Activated CD4-positive, alpha-beta memory T cell treated with anti-CD3 and anti-CD28 coated beads, Interleukin-2, amount 10 ng/mL, durations not matched to agents 7 days and 5 days (primary cell): ENCODE measurements at regions of chr17 and their contacts with region 1.

Region 1: DNA sequence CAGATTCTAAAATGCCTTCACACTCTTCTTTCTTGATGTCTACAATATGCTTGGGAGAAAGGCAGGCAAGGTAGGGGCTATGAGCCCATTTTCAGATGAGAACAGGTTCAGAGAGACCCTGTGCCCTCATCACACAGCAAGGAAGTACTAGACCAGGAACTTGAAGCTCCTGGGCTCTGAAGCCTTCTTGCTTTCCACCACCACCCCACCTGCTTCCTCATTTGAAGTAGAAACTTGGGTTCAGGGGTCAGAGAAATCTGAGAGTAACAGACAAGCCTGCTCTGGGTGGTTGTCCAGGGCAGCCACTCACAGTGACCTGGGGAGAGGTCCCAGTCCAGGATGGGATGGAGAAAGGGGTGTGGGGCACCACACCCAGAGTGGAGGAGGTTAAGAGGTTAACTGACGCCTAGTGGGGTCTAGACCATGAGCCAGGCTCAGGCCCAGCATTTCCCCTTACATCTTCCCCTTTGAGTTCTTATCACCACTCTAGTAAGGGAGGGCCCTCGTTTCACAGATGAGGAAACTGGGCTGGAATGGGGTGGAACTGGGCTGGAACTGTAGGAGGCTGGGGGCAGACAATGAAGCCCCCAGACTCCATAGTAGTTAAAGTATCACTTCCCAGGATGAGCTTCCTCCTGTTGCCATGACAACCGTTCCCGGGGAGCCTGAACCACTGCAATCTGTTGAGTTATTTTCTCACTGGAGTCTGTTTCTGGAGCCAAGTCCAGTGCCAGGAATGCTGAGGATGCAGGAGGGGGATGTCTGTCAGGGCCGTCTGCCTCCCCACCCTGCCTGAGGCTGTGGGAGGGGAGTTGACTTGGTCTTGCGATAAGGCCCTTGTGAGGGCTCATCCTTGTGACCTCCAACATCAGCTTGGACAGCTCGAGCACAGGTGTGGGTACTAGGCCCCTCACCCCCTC is 16.2 kb upstream of the PHF12 start:
- DNase-seq: no peak
- H3K4me3 Mint-ChIP-seq: no peak overlapping the region
- H3K27ac Mint-ChIP-seq: no peak overlapping the region
- H3K4me1 Mint-ChIP-seq: no peaks in the 10 kb centered on the region
- H3K27me3 Mint-ChIP-seq: peaks cover 22% of the 10 kb centered on the region

Region 2: GRCh38 chr17:29089601-29090044 is 122.1 kb after region 1 on chr17:
- CTCF ChIA-PET with region 1: interaction called, 10 read pairs
- POLR2A ChIA-PET with region 1: interaction called, 3 read pairs
- DNase-seq: no peak
- H3K4me3 Mint-ChIP-seq: no peak overlapping the region
- H3K27ac Mint-ChIP-seq: no peak overlapping the region
- H3K4me1 Mint-ChIP-seq: no peaks in the 10 kb centered on the region
- H3K27me3 Mint-ChIP-seq: no peaks in the 10 kb centered on the region

Region 3: DNA sequence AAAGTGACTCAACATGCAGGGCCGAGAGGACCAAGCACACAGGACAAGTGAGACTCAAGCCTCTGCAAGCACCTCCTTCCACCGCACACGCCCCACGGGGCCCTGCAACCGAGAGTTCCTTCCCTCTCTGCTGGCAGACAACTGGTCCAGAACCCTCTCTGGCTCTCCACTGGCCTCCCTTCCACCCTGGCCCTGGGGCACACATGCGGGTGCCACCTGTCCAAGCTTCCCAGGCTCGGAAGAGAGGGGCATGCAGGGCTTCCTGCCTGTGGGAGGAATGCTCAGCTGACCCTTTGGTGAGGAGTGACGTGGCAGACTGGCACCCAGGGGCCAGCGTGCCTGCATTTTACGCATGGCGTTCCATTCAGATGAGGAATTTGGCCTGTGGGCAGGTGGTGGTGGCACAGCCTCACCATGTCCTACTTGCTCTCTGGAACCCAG is 135.3 kb after region 1 on chr17:
- CTCF ChIA-PET with region 1: interaction called, 17 read pairs
- POLR2A ChIA-PET with region 1: no interaction called
- DNase-seq: no peak
- H3K4me3 Mint-ChIP-seq: no peak overlapping the region
- H3K27ac Mint-ChIP-seq: no peak overlapping the region
- H3K4me1 Mint-ChIP-seq: no peaks in the 10 kb centered on the region
- H3K27me3 Mint-ChIP-seq: no peaks in the 10 kb centered on the region

Region 4: GRCh38 chr17:29111816-29112499 is 144.5 kb after region 1 on chr17:
- CTCF ChIA-PET with region 1: interaction called, 236 read pairs
- POLR2A ChIA-PET with region 1: interaction called, 8 read pairs
- DNase-seq: peak; percentile 71
- H3K4me3 Mint-ChIP-seq: no peak overlapping the region
- H3K27ac Mint-ChIP-seq: no peak overlapping the region
- H3K4me1 Mint-ChIP-seq: peaks cover 3% of the 10 kb centered on the region
- H3K27me3 Mint-ChIP-seq: no peaks in the 10 kb centered on the region

Region 5: GRCh38 chr17:29116804-29117772 is 149.6 kb after region 1 on chr17:
- CTCF ChIA-PET with region 1: interaction called, 236 read pairs
- POLR2A ChIA-PET with region 1: interaction called, 8 read pairs
- DNase-seq: peak; percentile 80
- H3K4me3 Mint-ChIP-seq: no peak overlapping the region
- H3K27ac Mint-ChIP-seq: no peak overlapping the region
- H3K4me1 Mint-ChIP-seq: peaks cover 4% of the 10 kb centered on the region
- H3K27me3 Mint-ChIP-seq: no peaks in the 10 kb centered on the region

Region 6: DNA sequence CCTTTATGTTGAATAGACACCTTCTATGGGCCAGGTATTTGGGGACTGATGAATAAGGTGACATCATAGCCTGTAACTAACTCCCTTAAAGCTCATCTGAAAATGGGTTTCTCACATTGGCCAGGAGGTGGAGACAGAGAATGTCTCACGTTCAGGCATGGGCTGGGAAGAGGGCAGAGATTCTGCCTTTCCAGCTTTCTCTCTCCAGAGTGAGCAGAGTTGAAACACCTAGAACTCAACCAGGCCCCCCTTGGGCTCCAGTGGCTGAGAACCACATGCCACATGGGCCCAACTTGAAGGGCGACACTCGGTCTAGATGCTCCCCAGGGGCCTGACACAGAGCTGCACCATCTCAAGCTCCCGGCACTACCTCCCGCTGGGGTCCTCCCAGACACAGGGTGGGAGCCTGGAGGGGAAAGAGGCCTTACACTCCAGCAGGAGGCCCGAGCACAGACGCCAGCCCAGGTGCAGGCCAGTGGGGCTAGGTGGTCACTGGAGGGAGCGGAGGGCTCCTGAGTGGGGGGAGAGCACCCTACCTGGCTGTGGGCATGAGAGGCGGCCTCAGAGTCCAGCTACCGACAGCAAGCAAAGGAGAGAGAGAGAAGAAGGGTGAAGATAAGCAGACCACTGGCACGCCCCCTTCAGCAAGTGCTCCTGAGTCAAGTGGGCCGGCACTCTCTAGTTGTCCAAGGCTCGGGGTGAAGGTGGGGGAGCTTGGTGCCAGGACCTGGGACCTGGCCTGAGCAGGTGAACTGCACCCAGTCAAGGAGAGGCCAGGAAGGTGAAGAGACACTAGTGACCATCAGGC is 156.8 kb after region 1 on chr17:
- CTCF ChIA-PET with region 1: interaction called, 14 read pairs
- POLR2A ChIA-PET with region 1: no interaction called
- DNase-seq: peak; percentile 53
- H3K4me3 Mint-ChIP-seq: no peak overlapping the region
- H3K27ac Mint-ChIP-seq: no peak overlapping the region
- H3K4me1 Mint-ChIP-seq: peaks cover 8% of the 10 kb centered on the region
- H3K27me3 Mint-ChIP-seq: no peaks in the 10 kb centered on the region